ENCODE measurements at regions of chr19 and their contacts with region 1.

Region 1: GRCh38 chr19:18007044-18007916 is 690 bp upstream of the ARRDC2 start:
- DNase-seq: peak; percentile 91
- ATAC-seq: peak; percentile 59
- H3K4me3 ChIP-seq: peak overlapping the region; percentile 31 to 68 (median 56)
- H3K4me3 Mint-ChIP-seq: peak overlapping the region; percentile 98
- H3K27ac ChIP-seq: peak overlapping the region; percentile 90 to 93
- H3K27ac Mint-ChIP-seq: peak overlapping the region; percentile 94
- H3K4me1 ChIP-seq: peaks cover 30 to 41% of the 10 kb centered on the region in 2 donors
- H3K4me1 Mint-ChIP-seq: peaks cover 42% of the 10 kb centered on the region
- H3K27me3 ChIP-seq: no peaks in the 10 kb centered on the region
- H3K27me3 Mint-ChIP-seq: no peaks in the 10 kb centered on the region
- CTCF ChIP-seq: peak; percentile 100

Region 2: GRCh38 chr19:17784201-17785008 is 222.9 kb before region 1 on chr19:
- CTCF ChIA-PET with region 1: no interaction called
- POLR2A ChIA-PET with region 1: no interaction called
- intact Hi-C with region 1: no loop called
- DNase-seq: peak; percentile 83
- ATAC-seq: peak; percentile 86
- H3K4me3 ChIP-seq: no peak overlapping the region
- H3K4me3 Mint-ChIP-seq: no peak overlapping the region
- H3K27ac ChIP-seq: no peak overlapping the region
- H3K27ac Mint-ChIP-seq: peak overlapping the region; percentile 51
- H3K4me1 ChIP-seq: peaks cover 0 to 6% of the 10 kb centered on the region in 2 donors
- H3K4me1 Mint-ChIP-seq: peaks cover 5% of the 10 kb centered on the region
- H3K27me3 ChIP-seq: no peaks in the 10 kb centered on the region
- H3K27me3 Mint-ChIP-seq: no peaks in the 10 kb centered on the region
- CTCF ChIP-seq: peak; percentile 85

Region 3: DNA sequence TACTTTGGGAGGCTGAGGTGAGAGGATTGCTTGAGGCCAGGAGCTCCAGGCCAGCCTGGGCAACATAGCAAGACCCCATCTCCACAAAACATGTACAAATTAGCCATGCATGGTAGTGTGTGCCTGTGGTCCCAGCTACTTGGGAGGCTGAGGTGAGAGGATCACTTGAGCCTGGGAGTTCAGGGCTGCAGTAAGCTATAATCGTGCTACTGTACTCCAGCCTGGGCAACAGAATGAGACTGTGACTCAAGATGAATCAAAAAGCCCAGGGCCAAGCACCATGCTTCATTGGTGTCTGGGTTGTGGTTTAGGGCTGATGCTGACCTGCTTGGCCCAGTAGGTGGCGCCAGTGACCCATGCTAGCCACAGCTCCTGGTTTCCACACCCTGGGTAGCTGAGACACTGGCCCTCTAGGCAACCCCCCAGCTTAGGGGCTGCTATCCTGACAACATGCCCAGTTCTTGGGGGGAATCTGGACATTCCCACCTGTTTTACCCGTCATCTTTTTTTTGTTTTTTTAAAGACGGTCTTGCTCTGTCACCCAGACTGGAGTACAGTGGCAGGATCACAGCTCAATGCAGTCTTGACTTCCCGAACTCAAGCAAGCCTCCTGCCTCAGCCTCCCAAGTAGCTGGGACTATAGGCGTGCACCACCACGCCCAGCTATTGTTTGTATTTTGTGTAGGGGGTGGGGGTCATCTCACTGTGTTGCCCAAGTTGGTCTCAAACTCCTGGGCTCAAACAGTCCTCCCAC is 69.0 kb before region 1 on chr19:
- CTCF ChIA-PET with region 1: interaction called, 346 read pairs
- POLR2A ChIA-PET with region 1: interaction called, 3 read pairs
- intact Hi-C with region 1: no loop called
- DNase-seq: peak; percentile 88
- ATAC-seq: peak; percentile 98
- H3K4me3 ChIP-seq: no peak overlapping the region
- H3K4me3 Mint-ChIP-seq: no peak overlapping the region
- H3K27ac ChIP-seq: no peak overlapping the region
- H3K27ac Mint-ChIP-seq: peak overlapping the region; percentile 41
- H3K4me1 ChIP-seq: peaks cover 5 to 10% of the 10 kb centered on the region in 2 donors
- H3K4me1 Mint-ChIP-seq: peaks cover 11% of the 10 kb centered on the region
- H3K27me3 ChIP-seq: no peaks in the 10 kb centered on the region
- H3K27me3 Mint-ChIP-seq: no peaks in the 10 kb centered on the region
- CTCF ChIP-seq: peak; percentile 94

Region 4: GRCh38 chr19:18029617-18030338 is 22.5 kb after region 1 on chr19:
- CTCF ChIA-PET with region 1: interaction called, 10 read pairs
- POLR2A ChIA-PET with region 1: interaction called, 137 read pairs
- intact Hi-C with region 1: loop called (anchors 1 kb)
- DNase-seq: no peak
- ATAC-seq: no peak
- H3K4me3 ChIP-seq: no peak overlapping the region
- H3K4me3 Mint-ChIP-seq: no peak overlapping the region
- H3K27ac ChIP-seq: no peak overlapping the region
- H3K27ac Mint-ChIP-seq: peak overlapping the region; percentile 46
- H3K4me1 ChIP-seq: peaks cover 12 to 18% of the 10 kb centered on the region in 2 donors
- H3K4me1 Mint-ChIP-seq: peaks cover 33% of the 10 kb centered on the region
- H3K27me3 ChIP-seq: no peaks in the 10 kb centered on the region
- H3K27me3 Mint-ChIP-seq: no peaks in the 10 kb centered on the region
- CTCF ChIP-seq: no peak

Region 5: GRCh38 chr19:18051887-18052286 is 44.6 kb after region 1 on chr19:
- CTCF ChIA-PET with region 1: interaction called, 345 read pairs
- POLR2A ChIA-PET with region 1: interaction called, 37 read pairs
- intact Hi-C with region 1: no loop called
- DNase-seq: no peak
- ATAC-seq: no peak
- H3K4me3 ChIP-seq: no peak overlapping the region
- H3K4me3 Mint-ChIP-seq: no peak overlapping the region
- H3K27ac ChIP-seq: no peak overlapping the region
- H3K27ac Mint-ChIP-seq: no peak overlapping the region
- H3K4me1 ChIP-seq: peaks cover 0 to 3% of the 10 kb centered on the region in 2 donors
- H3K4me1 Mint-ChIP-seq: peaks cover 16% of the 10 kb centered on the region
- H3K27me3 ChIP-seq: no peaks in the 10 kb centered on the region
- H3K27me3 Mint-ChIP-seq: no peaks in the 10 kb centered on the region
- CTCF ChIP-seq: no peak

Region 6: DNA sequence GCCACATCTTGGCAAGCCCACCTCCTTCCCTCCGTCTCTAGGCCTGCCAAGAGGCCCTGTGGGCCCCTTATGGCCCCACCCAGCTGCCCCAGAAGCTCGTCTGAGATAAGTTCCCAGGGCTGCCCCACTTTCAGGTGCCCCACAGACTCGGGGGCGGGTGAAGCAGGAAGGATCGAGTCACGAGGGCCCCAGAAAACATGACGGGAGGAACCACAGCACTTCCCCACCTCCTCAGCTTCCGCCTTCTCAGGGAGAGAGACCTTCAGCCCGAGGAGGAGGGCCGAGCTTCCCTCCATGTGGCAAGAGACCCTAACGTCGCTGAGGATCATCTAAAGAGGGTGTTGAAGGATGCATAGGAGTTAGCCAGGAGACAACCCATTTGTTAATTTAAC is 83.9 kb after region 1 on chr19:
- CTCF ChIA-PET with region 1: interaction called, 10 read pairs
- POLR2A ChIA-PET with region 1: interaction called, 7 read pairs
- intact Hi-C with region 1: no loop called
- DNase-seq: peak; percentile 91
- ATAC-seq: peak; percentile 65
- H3K4me3 ChIP-seq: peak overlapping the region in 2 of 5 experiments; percentile 18 to 44
- H3K4me3 Mint-ChIP-seq: peak overlapping the region; percentile 80
- H3K27ac ChIP-seq: peak overlapping the region; percentile 94 to 97
- H3K27ac Mint-ChIP-seq: peak overlapping the region; percentile 97
- H3K4me1 ChIP-seq: peaks cover 52 to 62% of the 10 kb centered on the region in 2 donors
- H3K4me1 Mint-ChIP-seq: peaks cover 54% of the 10 kb centered on the region
- H3K27me3 ChIP-seq: no peaks in the 10 kb centered on the region
- H3K27me3 Mint-ChIP-seq: no peaks in the 10 kb centered on the region
- CTCF ChIP-seq: no peak

Region 7: DNA sequence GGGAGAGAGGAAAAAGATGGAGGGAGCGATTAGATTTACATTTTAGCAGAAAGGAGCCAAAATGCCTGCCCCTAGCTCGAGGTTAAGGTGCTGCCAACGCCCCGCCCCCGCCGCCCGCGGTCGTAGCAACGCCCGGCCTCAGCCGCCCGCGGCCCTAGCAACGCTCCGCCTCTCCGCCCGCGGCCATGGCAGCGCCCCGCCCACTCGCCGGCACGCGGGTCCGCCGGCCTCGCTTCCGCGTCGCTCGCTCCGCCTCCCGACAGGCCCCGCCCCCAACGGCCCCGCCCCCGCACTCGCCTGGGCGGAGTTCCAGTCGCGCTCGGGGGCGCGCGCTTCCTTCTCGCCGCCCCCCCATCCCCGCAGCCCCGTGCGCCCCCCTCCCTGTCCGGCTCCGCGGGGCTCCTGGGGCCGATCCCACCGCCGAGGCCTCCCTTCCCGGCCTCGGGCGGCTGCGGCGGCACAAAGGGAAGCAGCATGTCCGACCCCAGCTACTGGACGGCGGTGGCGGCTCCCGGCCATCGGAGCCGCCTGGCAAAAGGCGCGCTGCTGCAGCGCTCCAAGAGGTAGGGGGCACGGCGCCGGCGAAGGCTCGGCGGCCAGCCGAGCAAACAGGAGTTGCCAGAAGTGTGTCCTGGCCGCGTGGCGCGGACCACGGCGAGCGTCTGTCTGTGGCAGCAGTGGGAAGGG is 110.6 kb after region 1 on chr19:
- CTCF ChIA-PET with region 1: interaction called, 6 read pairs
- POLR2A ChIA-PET with region 1: interaction called, 4 read pairs
- intact Hi-C with region 1: loop called (anchors 2 kb)
- DNase-seq: peak; percentile 96
- ATAC-seq: peak; percentile 94
- H3K4me3 ChIP-seq: peak overlapping the region in 4 of 5 experiments; percentile 64 to 71 (median 66)
- H3K4me3 Mint-ChIP-seq: peak overlapping the region; percentile 86
- H3K27ac ChIP-seq: peak overlapping the region; percentile 47 to 76
- H3K27ac Mint-ChIP-seq: peak overlapping the region; percentile 85
- H3K4me1 ChIP-seq: peaks cover 30 to 36% of the 10 kb centered on the region in 2 donors
- H3K4me1 Mint-ChIP-seq: peaks cover 52% of the 10 kb centered on the region
- H3K27me3 ChIP-seq: no peaks in the 10 kb centered on the region
- H3K27me3 Mint-ChIP-seq: no peaks in the 10 kb centered on the region
- CTCF ChIP-seq: no peak

Measured in B cell (primary cell).